Activated CD4-positive, alpha-beta T cell treated with anti-CD3 and anti-CD28 coated beads for 36 hours (primary cell): ENCODE measurements at regions of chr3 and their contacts with region 1.

Region 1: DNA sequence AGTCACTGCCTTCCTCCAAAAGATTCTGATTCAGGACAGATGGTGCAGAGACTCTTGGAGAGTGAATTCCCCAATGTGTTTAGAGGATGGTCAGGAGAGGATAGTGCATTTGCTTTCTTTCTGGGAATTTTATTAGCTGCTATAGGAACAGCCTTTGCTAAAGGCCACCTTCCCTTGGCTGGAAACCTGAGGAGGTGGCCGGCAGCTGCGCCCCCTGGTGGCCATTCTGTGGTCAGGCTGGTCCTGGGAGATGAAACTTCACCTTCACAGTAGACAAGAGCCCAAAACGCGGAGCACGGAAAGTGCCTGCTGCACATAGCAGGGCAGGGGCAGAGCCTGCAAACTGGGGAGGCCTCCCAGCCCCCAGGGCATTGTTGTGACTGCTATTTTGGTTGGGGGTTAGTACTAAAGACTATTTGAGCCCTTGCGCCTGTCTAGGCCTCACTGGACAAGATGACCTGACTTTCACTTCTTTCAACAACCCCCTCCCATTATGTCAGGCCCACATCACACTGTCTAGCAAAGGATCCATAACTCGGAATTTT is 34.3 kb downstream of the SEC22C start:
- DNase-seq: peak; percentile 80
- ATAC-seq: peak; percentile 77
- H3K4me3 Mint-ChIP-seq: no peak overlapping the region
- H3K27ac Mint-ChIP-seq: no peak overlapping the region
- H3K4me1 Mint-ChIP-seq: no peaks in the 10 kb centered on the region
- H3K27me3 Mint-ChIP-seq: no peaks in the 10 kb centered on the region

Region 2: DNA sequence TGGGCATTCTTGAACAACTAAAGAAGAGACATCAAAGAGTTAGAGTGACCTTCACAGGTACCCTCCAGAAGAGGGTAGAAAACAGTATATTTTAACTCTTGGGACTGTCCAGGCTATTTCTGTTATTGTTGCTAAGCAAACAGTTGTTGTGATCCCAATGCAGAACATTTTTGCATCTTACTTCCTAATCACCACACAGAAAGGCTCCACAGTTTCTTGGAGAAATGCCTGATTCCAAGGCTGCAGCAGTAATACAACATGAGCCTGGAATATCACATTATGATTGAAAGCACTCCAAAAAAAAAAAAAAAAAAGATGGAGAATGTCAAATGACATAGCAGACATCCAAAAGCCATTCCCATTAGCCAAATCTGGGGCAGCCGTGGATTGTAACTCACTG is 1152.6 kb before region 1 on chr3:
- CTCF ChIA-PET with region 1: no interaction called
- POLR2A ChIA-PET with region 1: no interaction called
- intact Hi-C with region 1: no loop called
- DNase-seq: no peak
- ATAC-seq: no peak
- H3K4me3 Mint-ChIP-seq: no peak overlapping the region
- H3K27ac Mint-ChIP-seq: no peak overlapping the region
- H3K4me1 Mint-ChIP-seq: no peaks in the 10 kb centered on the region
- H3K27me3 Mint-ChIP-seq: no peaks in the 10 kb centered on the region

Region 3: GRCh38 chr3:41846850-41847249 is 700.6 kb before region 1 on chr3:
- CTCF ChIA-PET with region 1: no interaction called
- POLR2A ChIA-PET with region 1: no interaction called
- intact Hi-C with region 1: no loop called
- DNase-seq: peak; percentile 30
- ATAC-seq: peak; percentile 68
- H3K4me3 Mint-ChIP-seq: no peak overlapping the region
- H3K27ac Mint-ChIP-seq: no peak overlapping the region
- H3K4me1 Mint-ChIP-seq: peaks cover 18% of the 10 kb centered on the region
- H3K27me3 Mint-ChIP-seq: no peaks in the 10 kb centered on the region

Region 4: DNA sequence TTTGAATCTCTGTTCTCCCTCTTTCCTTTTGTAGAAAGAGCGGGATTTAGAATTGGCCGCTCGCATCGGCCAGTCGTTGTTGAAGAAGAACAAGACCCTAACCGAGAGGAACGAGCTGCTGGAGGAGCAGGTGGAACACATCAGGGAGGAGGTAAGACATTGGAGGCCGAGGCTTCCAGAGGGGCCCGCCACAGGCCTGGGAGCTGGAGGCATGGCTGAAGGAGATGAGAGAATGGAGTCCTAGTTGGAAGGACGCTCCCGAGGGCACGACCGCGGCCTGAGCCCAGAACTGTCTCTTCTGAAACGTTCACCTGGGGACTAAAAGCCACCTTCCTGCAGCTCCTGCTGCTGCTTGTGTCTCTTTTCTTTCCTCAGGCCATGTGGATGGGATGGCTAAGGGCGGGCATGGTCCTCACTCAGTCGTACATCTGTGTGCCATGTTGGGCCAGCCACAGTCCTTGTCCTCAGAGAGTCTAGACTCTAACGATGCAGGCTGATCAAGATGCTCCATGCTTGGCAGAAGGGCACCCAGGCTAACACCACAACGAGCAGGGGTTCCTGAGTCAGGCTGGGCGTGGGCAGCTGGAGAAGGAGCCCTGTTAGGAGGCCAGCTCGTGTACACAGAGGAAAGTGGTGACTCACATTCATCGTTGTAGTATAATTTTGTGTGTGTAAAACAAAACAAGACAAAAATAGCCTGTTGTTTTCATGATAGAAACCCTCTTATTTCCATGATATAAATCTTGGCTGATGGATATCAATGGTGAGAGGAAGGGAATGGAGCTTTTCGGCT is 362.6 kb before region 1 on chr3:
- CTCF ChIA-PET with region 1: no interaction called
- POLR2A ChIA-PET with region 1: no interaction called
- intact Hi-C with region 1: no loop called
- DNase-seq: no peak
- ATAC-seq: no peak
- H3K4me3 Mint-ChIP-seq: no peak overlapping the region
- H3K27ac Mint-ChIP-seq: peak overlapping the region; percentile 30
- H3K4me1 Mint-ChIP-seq: no peaks in the 10 kb centered on the region
- H3K27me3 Mint-ChIP-seq: no peaks in the 10 kb centered on the region

Region 5: GRCh38 chr3:42290966-42291714 is 256.3 kb before region 1 on chr3:
- CTCF ChIA-PET with region 1: no interaction called
- POLR2A ChIA-PET with region 1: no interaction called
- intact Hi-C with region 1: no loop called
- DNase-seq: peak; percentile 24
- ATAC-seq: peak; percentile 68
- H3K4me3 Mint-ChIP-seq: no peak overlapping the region
- H3K27ac Mint-ChIP-seq: no peak overlapping the region
- H3K4me1 Mint-ChIP-seq: peaks cover 7% of the 10 kb centered on the region
- H3K27me3 Mint-ChIP-seq: peaks cover 10% of the 10 kb centered on the region

Region 6: GRCh38 chr3:42533161-42533897 is 14.1 kb before region 1 on chr3:
- CTCF ChIA-PET with region 1: interaction called, 37 read pairs
- POLR2A ChIA-PET with region 1: no interaction called
- intact Hi-C with region 1: no loop called
- DNase-seq: no peak
- ATAC-seq: no peak
- H3K4me3 Mint-ChIP-seq: no peak overlapping the region
- H3K27ac Mint-ChIP-seq: no peak overlapping the region
- H3K4me1 Mint-ChIP-seq: peaks cover 58% of the 10 kb centered on the region
- H3K27me3 Mint-ChIP-seq: no peaks in the 10 kb centered on the region